Posterior cingulate gyrus (tissue), 11 donors: ENCODE measurements at regions of chr7 and their contacts with region 1.

Region 1: GRCh38 chr7:119935418-119936025 is 337.5 kb upstream of the KCND2 start:
- DNase-seq: no peak

Region 2: DNA sequence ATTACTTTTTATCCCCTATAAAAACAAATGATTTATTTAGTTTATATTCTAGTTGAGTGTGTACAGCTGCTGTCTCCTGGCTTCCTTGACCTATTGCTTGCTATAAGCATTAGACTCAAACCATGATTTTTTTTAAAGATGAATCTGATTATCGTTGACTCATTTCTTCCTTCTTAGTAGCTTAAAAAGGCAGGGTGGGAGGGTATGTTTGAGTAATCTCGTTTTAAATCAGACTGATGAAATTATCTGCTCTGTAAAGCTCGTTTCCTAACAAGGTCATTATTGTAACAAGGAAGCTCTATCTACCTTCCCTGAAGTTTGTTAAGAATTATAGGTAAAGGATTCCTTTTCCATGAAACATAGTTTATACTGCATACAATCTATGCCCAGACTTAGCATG is 61.1 kb after region 1 on chr7:
- intact Hi-C with region 1: no loop called
- DNase-seq: no peak

Region 3: GRCh38 chr7:120272261-120272660 is 336.7 kb after region 1 on chr7:
- intact Hi-C with region 1: loop called (anchors 2 kb)
- DNase-seq: peak in 1 of 10 donors; percentile 29